Colonic mucosa (tissue), 4 donors: ENCODE measurements at regions of chr20 and their contacts with region 1.

Region 1: GRCh38 chr20:36886859-36887751 is 11.2 kb downstream of the TLDC2 start:
- DNase-seq: peak; percentile 92
- H3K4me3 ChIP-seq: no peak overlapping the region
- H3K27ac ChIP-seq: no peak overlapping the region
- H3K4me1 ChIP-seq: no peaks in the 10 kb centered on the region
- H3K27me3 ChIP-seq: no peaks in the 10 kb centered on the region
- CTCF ChIP-seq: peak; percentile 94

Region 2: GRCh38 chr20:36613974-36614373 is 273.1 kb before region 1 on chr20:
- intact Hi-C with region 1: loop called (anchors 5 kb)
- DNase-seq: peak; percentile 34
- H3K4me3 ChIP-seq: no peak overlapping the region
- H3K27ac ChIP-seq: no peak overlapping the region
- H3K4me1 ChIP-seq: no peaks in the 10 kb centered on the region
- H3K27me3 ChIP-seq: no peaks in the 10 kb centered on the region
- CTCF ChIP-seq: no peak

Region 3: GRCh38 chr20:36808317-36809257 is 78.5 kb before region 1 on chr20:
- intact Hi-C with region 1: loop called (anchors 10 kb)
- DNase-seq: peak; percentile 80
- H3K4me3 ChIP-seq: no peak overlapping the region
- H3K27ac ChIP-seq: peak overlapping the region; percentile 67
- H3K4me1 ChIP-seq: no peaks in the 10 kb centered on the region
- H3K27me3 ChIP-seq: no peaks in the 10 kb centered on the region
- CTCF ChIP-seq: peak; percentile 79

Region 4: GRCh38 chr20:37123441-37123840 is 236.3 kb after region 1 on chr20:
- intact Hi-C with region 1: no loop called
- DNase-seq: no peak
- H3K4me3 ChIP-seq: no peak overlapping the region
- H3K27ac ChIP-seq: no peak overlapping the region
- H3K4me1 ChIP-seq: no peaks in the 10 kb centered on the region
- H3K27me3 ChIP-seq: no peaks in the 10 kb centered on the region
- CTCF ChIP-seq: no peak